CD8-positive, alpha-beta memory T cell (primary cell): ENCODE measurements at regions of chr14 and their contacts with region 1.

Region 1: GRCh38 chr14:49620182-49621113 is at the starts of genes MGAT2 and RPL36AL:
- DNase-seq: peak; percentile 91 to 96 (median 96)
- H3K4me3 ChIP-seq: peak within 1 kb of the TSS; percentile 80
- H3K4me3 Mint-ChIP-seq: peak within 1 kb of the TSS; percentile 94 to 99 (median 98)
- H3K27ac ChIP-seq: peak within 1 kb of the TSS; percentile 99
- H3K27ac Mint-ChIP-seq: peak within 1 kb of the TSS; percentile 98 to 100 (median 100)
- H3K4me1 ChIP-seq: peaks cover 50% of the 10 kb centered on the region
- H3K4me1 Mint-ChIP-seq: peaks cover 57 to 68% (median 65%) of the 10 kb centered on the region in 3 donors
- H3K27me3 ChIP-seq: no peaks in the 10 kb centered on the region
- H3K27me3 Mint-ChIP-seq: no peaks in the 10 kb centered on the region
- total RNA-seq, gene MGAT2: 57.7 to 60.2 TPM
- total RNA-seq, gene RPL36AL: 236 to 273 TPM

Region 2: GRCh38 chr14:49598485-49599300 is 21.8 kb before region 1 on chr14 and contains the start of gene LRR1:
- CTCF ChIA-PET with region 1: interaction called, 28 read pairs
- POLR2A ChIA-PET with region 1: interaction called, 50 read pairs
- DNase-seq: peak; percentile 77 to 91 (median 88)
- H3K4me3 ChIP-seq: peak within 1 kb of the TSS; percentile 99
- H3K4me3 Mint-ChIP-seq: peak within 1 kb of the TSS; percentile 93 to 100 (median 97)
- H3K27ac ChIP-seq: peak within 1 kb of the TSS; percentile 94
- H3K27ac Mint-ChIP-seq: peak within 1 kb of the TSS; percentile 94 to 99 (median 97)
- H3K4me1 ChIP-seq: peaks cover 10% of the 10 kb centered on the region
- H3K4me1 Mint-ChIP-seq: peaks cover 23 to 50% (median 36%) of the 10 kb centered on the region in 3 donors
- H3K27me3 ChIP-seq: no peaks in the 10 kb centered on the region
- H3K27me3 Mint-ChIP-seq: no peaks in the 10 kb centered on the region
- total RNA-seq, gene LRR1: 51.1 to 52.2 TPM

Region 3: DNA sequence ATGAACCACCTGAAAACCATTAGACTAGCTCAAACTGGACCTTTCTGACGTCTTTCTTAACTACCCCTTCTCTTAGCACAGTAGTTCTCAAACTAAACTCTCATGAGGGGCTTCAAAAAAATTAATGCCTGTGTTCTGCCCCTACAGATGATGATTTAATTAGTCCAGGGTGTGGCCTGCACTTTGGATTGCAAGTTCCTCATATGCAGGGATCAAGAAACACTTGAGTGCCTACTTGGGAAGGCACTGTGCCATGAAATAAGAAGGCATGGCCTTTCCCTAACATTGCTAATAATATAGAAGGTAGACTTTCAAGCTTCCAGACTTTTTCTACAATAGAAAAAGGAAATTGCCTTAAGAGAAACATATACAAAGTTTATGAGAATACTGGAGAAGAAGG is 124.7 kb after region 1 on chr14:
- CTCF ChIA-PET with region 1: no interaction called
- POLR2A ChIA-PET with region 1: no interaction called
- DNase-seq: no peak
- H3K4me3 ChIP-seq: no peak overlapping the region
- H3K4me3 Mint-ChIP-seq: no peak overlapping the region
- H3K27ac ChIP-seq: no peak overlapping the region
- H3K27ac Mint-ChIP-seq: no peak overlapping the region
- H3K4me1 ChIP-seq: no peaks in the 10 kb centered on the region
- H3K4me1 Mint-ChIP-seq: no peaks in the 10 kb centered on the region
- H3K27me3 ChIP-seq: no peaks in the 10 kb centered on the region
- H3K27me3 Mint-ChIP-seq: no peaks in the 10 kb centered on the region

Region 4: GRCh38 chr14:49767562-49768300 is 147.3 kb after region 1 on chr14 and contains the start of gene KLHDC2:
- CTCF ChIA-PET with region 1: interaction called, 26 read pairs
- POLR2A ChIA-PET with region 1: interaction called, 50 read pairs
- DNase-seq: peak; percentile 83 to 91 (median 89)
- H3K4me3 ChIP-seq: peak within 1 kb of the TSS; percentile 99
- H3K4me3 Mint-ChIP-seq: peak within 1 kb of the TSS; percentile 96 to 99 (median 98)
- H3K27ac ChIP-seq: peak within 1 kb of the TSS; percentile 98
- H3K27ac Mint-ChIP-seq: peak within 1 kb of the TSS; percentile 98 to 100 (median 99)
- H3K4me1 ChIP-seq: peaks cover 28% of the 10 kb centered on the region
- H3K4me1 Mint-ChIP-seq: peaks cover 30 to 43% (median 42%) of the 10 kb centered on the region in 3 donors
- H3K27me3 ChIP-seq: no peaks in the 10 kb centered on the region
- H3K27me3 Mint-ChIP-seq: peaks cover 0 to 3% of the 10 kb centered on the region in 2 donors
- total RNA-seq, gene KLHDC2: 28.9 to 29.0 TPM